Heart left ventricle (tissue), 16 donors: ENCODE measurements at regions of chr2 and their contacts with region 1.

Region 1: GRCh38 chr2:31333527-31334183 is 80.9 kb downstream of the XDH start:
- DNase-seq: peak; percentile 67 to 83 (median 72)
- ATAC-seq: peak; percentile 70 to 88 (median 80)
- H3K4me3 ChIP-seq: no peak overlapping the region
- H3K27ac ChIP-seq: no peak overlapping the region
- H3K4me1 ChIP-seq: peaks cover 0 to 7% (median 0%) of the 10 kb centered on the region in 12 donors
- H3K27me3 ChIP-seq: no peaks in the 10 kb centered on the region
- CTCF ChIP-seq: peak; percentile 82 to 98 (median 94)
- POLR2A ChIP-seq: no peak

Region 2: GRCh38 chr2:30208452-30208851 is 1125.2 kb before region 1 on chr2:
- intact Hi-C with region 1: loop called in 1 of 10 experiments (anchors 10 kb)
- DNase-seq: peak in 4 of 5 donors; percentile 63 to 79 (median 74)
- ATAC-seq: peak; percentile 51 to 96 (median 94)
- H3K4me3 ChIP-seq: no peak overlapping the region
- H3K27ac ChIP-seq: peak overlapping the region in 2 of 12 donors; percentile 16 to 35
- H3K4me1 ChIP-seq: peaks cover 0 to 28% (median 4%) of the 10 kb centered on the region in 12 donors
- H3K27me3 ChIP-seq: no peaks in the 10 kb centered on the region
- CTCF ChIP-seq: peak; percentile 82 to 96 (median 90)
- POLR2A ChIP-seq: no peak

Region 3: DNA sequence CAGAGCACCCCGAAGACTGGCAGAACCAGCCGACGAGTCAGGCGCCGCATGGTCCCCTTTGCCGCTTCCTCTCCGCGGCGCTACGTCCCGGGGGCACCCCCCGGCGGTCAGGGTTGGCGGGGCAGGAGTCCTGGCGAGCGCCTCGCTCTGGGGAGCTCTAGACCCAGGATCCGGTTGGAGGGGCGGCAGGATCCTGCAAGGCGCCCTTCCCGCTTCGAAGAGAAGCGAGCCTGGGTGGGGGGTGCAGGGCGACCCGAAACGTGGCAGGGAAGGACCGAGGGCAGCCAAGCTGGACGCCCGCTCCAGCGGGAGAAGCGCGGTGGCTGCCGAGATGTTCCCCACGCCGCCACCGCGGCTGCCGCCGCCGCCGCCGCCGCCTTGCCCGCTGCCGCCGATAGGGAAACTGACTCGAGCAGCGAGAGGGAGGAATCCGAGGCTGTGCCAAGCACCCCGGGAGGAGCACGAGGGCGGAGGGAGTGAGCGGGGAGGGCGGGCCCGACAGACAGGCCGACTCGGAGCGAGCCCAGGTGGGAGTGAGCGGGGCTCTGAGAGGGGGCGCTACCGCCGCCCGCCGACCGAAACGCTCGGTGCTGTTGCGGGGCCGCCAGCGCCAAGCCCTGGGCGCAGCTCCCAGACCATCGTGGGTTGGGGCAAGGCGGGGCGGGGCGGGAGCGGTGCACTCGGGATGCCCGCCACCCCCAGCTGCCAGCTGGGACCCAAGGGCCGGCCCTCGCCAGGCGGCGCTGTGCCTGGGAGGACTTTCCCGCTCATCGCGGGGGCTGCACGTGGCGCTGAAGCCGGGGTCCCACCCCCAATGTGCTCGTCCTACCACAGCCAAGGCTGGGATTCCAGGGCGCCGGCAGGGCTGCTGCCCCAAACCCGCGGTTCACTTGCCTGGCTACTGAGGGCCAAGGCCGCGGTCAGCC is 195.4 kb before region 1 on chr2 and contains the start of gene GALNT14:
- intact Hi-C with region 1: loop called in 1 of 10 experiments (anchors 10 kb)
- DNase-seq: peak; percentile 49 to 77 (median 54)
- ATAC-seq: peak; percentile 30 to 92 (median 82)
- H3K4me3 ChIP-seq: peak within 1 kb of the TSS; percentile 16 to 63 (median 56)
- H3K27ac ChIP-seq: no peak within 1 kb of the TSS
- H3K4me1 ChIP-seq: peaks cover 4 to 19% (median 14%) of the 10 kb centered on the region in 12 donors
- H3K27me3 ChIP-seq: peaks cover 9 to 53% (median 33%) of the 10 kb centered on the region in 9 donors
- CTCF ChIP-seq: peak in 11 of 12 donors; percentile 19 to 54 (median 43)
- POLR2A ChIP-seq: no peak
- total RNA-seq, gene GALNT14: 0.44 to 2.4 (median 1.0) TPM in 7 of 9 donors, not detected in the others

Region 4: DNA sequence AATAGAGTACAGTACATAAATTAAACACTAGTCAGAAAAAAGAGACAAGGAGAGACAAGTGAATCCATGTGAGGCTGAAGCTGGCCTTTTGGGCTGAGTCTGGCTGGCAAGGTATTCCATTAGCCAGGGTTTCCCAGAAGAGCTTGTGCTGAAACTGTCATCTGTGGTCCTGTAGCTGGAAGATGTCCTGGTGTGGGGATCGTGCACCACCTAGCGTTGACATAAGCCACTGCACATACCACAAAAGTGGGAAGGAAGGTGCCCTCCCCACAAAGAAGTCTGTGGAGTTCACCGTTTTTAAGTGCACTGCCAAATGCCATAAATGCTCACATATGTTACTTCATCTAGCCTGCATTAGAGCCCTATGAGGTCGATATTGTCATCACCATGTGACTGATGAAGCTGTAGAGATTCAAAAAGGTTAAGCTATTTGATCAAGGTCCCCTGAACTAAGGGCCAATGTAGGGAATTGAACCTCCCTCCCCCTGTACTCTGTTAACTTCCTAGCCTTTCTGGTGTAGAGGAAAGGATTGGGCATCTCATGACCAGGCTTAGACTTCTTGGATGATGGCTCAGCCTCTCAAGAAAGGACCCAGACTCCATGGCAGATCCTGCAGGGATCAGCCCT is 163.5 kb before region 1 on chr2:
- intact Hi-C with region 1: loop called in 8 of 10 experiments (anchors 2 to 10 kb)
- DNase-seq: peak; percentile 30 to 73 (median 42)
- ATAC-seq: peak; percentile 57 to 93 (median 86)
- H3K4me3 ChIP-seq: no peak overlapping the region
- H3K27ac ChIP-seq: no peak overlapping the region
- H3K4me1 ChIP-seq: no peaks in the 10 kb centered on the region
- H3K27me3 ChIP-seq: no peaks in the 10 kb centered on the region
- CTCF ChIP-seq: peak; percentile 83 to 95 (median 88)
- POLR2A ChIP-seq: no peak

Region 5: GRCh38 chr2:31239593-31240177 is 94.0 kb before region 1 on chr2:
- intact Hi-C with region 1: loop called in 5 of 10 experiments (anchors 5 to 10 kb)
- DNase-seq: peak; percentile 75 to 89 (median 81)
- ATAC-seq: peak; percentile 90 to 93 (median 92)
- H3K4me3 ChIP-seq: peak overlapping the region in 2 of 12 donors; percentile 2 to 4
- H3K27ac ChIP-seq: peak overlapping the region; percentile 73 to 95 (median 90)
- H3K4me1 ChIP-seq: peaks cover 11 to 71% (median 55%) of the 10 kb centered on the region in 12 donors
- H3K27me3 ChIP-seq: no peaks in the 10 kb centered on the region
- CTCF ChIP-seq: no peak
- POLR2A ChIP-seq: peak in 1 of 2 donors; percentile 51